Aorta (tissue), 5 donors: ENCODE measurements at regions of chr22 and their contacts with region 1.

Region 1: GRCh38 chr22:46108564-46109473 is 41.5 kb upstream of the PPARA start:
- DNase-seq: no peak
- ATAC-seq: no peak
- H3K4me3 ChIP-seq: no peak overlapping the region
- H3K27ac ChIP-seq: peak overlapping the region in 1 of 2 donors; percentile 23
- H3K4me1 ChIP-seq: no peaks in the 10 kb centered on the region
- H3K27me3 ChIP-seq: no peaks in the 10 kb centered on the region

Region 2: GRCh38 chr22:46071451-46072109 is 37.2 kb before region 1 on chr22:
- intact Hi-C with region 1: loop called (anchors 5 kb)
- DNase-seq: peak; percentile 95
- ATAC-seq: peak; percentile 48
- H3K4me3 ChIP-seq: peak overlapping the region; percentile 63 to 95
- H3K27ac ChIP-seq: peak overlapping the region; percentile 95 to 98
- H3K4me1 ChIP-seq: peaks cover 0 to 3% of the 10 kb centered on the region in 2 donors
- H3K27me3 ChIP-seq: no peaks in the 10 kb centered on the region

Region 3: DNA sequence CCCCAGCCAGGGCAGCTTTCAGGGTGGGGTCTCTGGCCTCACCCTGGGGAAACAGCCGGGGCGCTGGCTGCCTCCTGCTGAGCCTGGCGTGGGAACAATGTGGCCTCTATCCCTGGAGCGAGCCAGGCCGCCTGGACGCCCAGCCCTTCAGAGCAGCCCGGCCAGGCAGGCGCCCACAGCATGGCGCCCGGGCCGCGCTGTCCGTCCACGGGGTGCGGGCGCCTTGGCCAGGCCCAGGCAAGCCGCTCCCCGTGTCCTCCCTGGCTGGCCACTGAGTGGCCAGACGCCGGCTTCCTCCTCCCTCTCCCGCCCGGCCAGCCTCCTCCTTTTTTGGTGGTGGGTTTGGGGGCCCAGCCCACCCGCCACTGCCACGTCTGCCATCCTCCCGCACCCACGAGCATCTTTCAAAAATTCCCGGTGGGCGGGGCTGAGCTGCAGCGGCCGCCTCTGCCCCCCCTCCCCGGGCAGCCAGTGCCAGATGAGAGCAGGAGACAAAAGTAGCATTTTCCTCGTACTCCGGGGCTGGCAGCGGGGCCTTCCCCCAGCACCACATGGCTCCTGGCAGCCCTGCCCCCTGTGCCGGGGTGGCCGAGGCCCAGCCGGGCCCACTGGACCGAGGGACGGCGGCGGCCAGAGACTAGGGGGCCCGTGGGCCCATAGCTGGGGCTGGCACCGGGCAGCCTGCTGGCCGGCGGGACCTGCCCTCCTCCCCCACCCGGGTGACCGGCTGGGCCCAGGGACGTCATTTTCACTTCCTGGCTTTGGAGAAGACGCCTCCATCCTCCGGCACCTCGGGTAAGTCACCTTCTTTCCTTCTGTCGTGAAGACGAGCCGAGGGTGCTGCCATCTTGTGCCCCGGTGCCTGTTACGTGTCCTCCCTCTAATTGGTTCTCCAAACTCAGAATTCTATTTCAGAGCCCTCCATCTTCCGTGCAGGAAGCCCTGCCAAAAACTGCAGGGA is 28.7 kb before region 1 on chr22:
- intact Hi-C with region 1: loop called in 1 of 2 experiments (anchors 5 kb)
- DNase-seq: peak; percentile 94 to 95
- ATAC-seq: peak; percentile 79
- H3K4me3 ChIP-seq: peak overlapping the region; percentile 24 to 30
- H3K27ac ChIP-seq: peak overlapping the region; percentile 80 to 90
- H3K4me1 ChIP-seq: no peaks in the 10 kb centered on the region
- H3K27me3 ChIP-seq: no peaks in the 10 kb centered on the region

Region 4: GRCh38 chr22:46087336-46088277 is 21.2 kb before region 1 on chr22:
- intact Hi-C with region 1: loop called in 1 of 2 experiments (anchors 2 kb)
- DNase-seq: peak; percentile 94 to 95
- ATAC-seq: peak; percentile 89
- H3K4me3 ChIP-seq: no peak overlapping the region
- H3K27ac ChIP-seq: peak overlapping the region; percentile 68 to 73
- H3K4me1 ChIP-seq: peaks cover 0 to 6% of the 10 kb centered on the region in 2 donors
- H3K27me3 ChIP-seq: no peaks in the 10 kb centered on the region